ENCODE measurements at regions of chr12 and their contacts with region 1.

Region 1: GRCh38 chr12:69985656-69986055 is 160.6 kb downstream of the MYRFL start:
- DNase-seq: peak in 1 of 2 donors; percentile 57
- ATAC-seq: no peak
- H3K4me3 ChIP-seq: no peak overlapping the region
- H3K27ac ChIP-seq: no peak overlapping the region
- H3K4me1 ChIP-seq: no peaks in the 10 kb centered on the region
- H3K27me3 ChIP-seq: no peaks in the 10 kb centered on the region

Region 2: GRCh38 chr12:68962875-68963855 is 1022.5 kb before region 1 on chr12:
- intact Hi-C with region 1: no loop called
- DNase-seq: no peak
- ATAC-seq: no peak
- H3K4me3 ChIP-seq: no peak overlapping the region
- H3K27ac ChIP-seq: no peak overlapping the region
- H3K4me1 ChIP-seq: no peaks in the 10 kb centered on the region
- H3K27me3 ChIP-seq: no peaks in the 10 kb centered on the region

Region 3: DNA sequence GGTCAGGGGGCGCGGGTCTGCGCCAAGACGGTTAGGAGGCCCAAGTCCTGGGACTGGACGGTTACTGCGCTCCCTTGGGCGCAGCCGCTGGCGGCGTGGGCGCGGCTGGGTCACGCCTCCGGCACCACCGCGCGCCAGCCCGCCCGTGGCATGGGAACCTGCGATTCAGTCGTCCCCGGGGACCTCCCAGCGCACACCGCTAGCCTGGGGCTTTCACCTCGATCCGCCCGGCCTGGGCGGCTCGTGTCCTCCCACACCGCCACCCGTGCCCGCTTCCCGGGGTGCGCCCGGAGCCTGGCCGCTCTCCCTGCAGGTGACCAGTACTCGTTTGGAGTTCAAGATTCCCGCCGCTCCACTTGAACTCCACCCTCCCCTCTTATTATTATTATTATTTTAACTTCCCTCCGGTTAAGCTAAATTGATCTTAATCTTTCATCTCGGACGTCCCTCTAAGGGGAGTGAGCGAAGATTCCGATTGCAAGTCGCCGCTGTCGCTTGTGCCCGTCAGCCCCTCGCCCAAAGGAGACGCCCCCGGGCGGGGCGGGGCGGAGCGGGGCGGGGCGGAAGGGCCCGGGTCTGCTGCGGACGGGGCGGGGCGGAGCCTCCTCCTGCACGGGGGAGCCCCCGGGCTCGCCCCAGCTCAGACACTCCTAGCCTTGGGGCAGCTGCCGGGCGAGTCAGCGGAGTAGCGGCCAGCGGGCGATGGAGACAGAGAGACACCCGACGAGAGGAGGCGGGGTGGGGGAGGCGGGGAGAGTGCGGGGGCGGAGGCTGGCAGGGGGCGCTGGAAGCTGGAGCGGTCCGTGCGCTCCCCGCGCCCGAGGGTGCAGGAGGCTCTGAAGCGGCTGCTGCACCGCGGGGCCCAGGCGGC is 380.2 kb after region 1 on chr12 and contains the start of gene KCNMB4:
- intact Hi-C with region 1: loop called in 1 of 2 experiments (anchors 10 kb)
- DNase-seq: peak; percentile 68 to 88
- ATAC-seq: peak; percentile 89
- H3K4me3 ChIP-seq: peak within 1 kb of the TSS; percentile 92 to 98
- H3K27ac ChIP-seq: no peak within 1 kb of the TSS
- H3K4me1 ChIP-seq: no peaks in the 10 kb centered on the region
- H3K27me3 ChIP-seq: no peaks in the 10 kb centered on the region
- total RNA-seq, gene KCNMB4: 2.0 to 3.3 TPM

Measured in aorta (tissue), 5 donors.